ENCODE measurements at regions of chr7 and their contacts with region 1.

Region 1: GRCh38 chr7:143240291-143241168 is 18.7 kb downstream of the TAS2R40 start:
- DNase-seq: peak; percentile 92
- H3K4me3 Mint-ChIP-seq: peak overlapping the region; percentile 11
- H3K27ac Mint-ChIP-seq: peak overlapping the region; percentile 82
- H3K4me1 Mint-ChIP-seq: peaks cover 44% of the 10 kb centered on the region
- H3K27me3 Mint-ChIP-seq: peaks cover 15% of the 10 kb centered on the region

Region 2: DNA sequence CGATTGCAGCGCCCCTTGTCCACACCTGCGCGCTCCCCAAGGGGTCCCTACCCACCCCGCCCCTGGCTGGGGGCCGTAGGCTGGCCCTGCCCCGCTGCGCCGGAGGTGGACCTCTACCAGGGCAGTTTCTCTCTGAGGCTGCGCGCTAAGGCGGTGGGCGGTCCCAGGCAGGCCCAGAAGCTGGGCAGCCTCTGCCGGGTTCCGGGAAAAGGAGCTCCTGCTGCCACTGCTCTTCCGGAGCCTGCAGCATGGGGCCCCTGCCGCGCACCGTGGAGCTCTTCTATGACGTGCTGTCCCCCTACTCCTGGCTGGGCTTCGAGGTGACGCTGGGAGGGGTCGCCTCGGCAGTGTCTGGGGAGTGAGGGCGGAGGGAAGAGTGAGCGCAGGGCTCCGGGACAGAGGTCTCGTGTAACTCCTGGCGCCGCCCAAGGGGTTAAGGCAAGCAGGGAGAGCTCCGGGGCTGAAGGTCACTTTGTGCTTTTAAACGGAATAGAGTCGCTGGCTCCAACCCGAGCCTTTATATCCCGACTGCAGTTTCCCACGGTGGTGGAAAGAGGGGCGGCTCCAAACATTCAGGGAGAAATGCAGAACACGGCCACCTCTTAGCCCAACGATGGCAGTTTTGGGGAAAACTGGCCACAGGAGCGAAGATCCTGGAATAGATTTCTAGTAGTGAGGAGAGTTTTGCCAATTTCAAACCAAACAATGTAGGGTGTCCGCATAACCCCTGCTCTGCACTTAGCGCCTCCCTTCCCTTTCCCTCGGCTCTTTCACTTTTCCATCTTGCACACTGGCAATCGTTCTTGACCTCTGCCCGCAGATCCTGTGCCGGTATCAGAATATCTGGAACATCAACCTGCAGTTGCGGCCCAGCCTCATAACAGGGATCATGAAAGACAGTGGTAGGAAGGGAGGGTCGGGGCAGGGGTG is 23.0 kb after region 1 on chr7 and contains the start of gene GSTK1:
- intact Hi-C with region 1: loop called (anchors 1 kb)
- DNase-seq: peak; percentile 96
- H3K4me3 Mint-ChIP-seq: peak within 1 kb of the TSS; percentile 97
- H3K27ac Mint-ChIP-seq: peak within 1 kb of the TSS; percentile 92
- H3K4me1 Mint-ChIP-seq: peaks cover 46% of the 10 kb centered on the region
- H3K27me3 Mint-ChIP-seq: no peaks in the 10 kb centered on the region
- total RNA-seq, gene GSTK1: 138 and 142 TPM in 2 replicates

Region 3: GRCh38 chr7:143287935-143288826 is 47.7 kb after region 1 on chr7 and contains the start of gene CASP2:
- intact Hi-C with region 1: loop called (anchors 1 kb)
- DNase-seq: peak; percentile 100
- H3K4me3 Mint-ChIP-seq: peak within 1 kb of the TSS; percentile 97
- H3K27ac Mint-ChIP-seq: peak within 1 kb of the TSS; percentile 95
- H3K4me1 Mint-ChIP-seq: peaks cover 54% of the 10 kb centered on the region
- H3K27me3 Mint-ChIP-seq: no peaks in the 10 kb centered on the region
- total RNA-seq, gene CASP2: 99.1 and 110 TPM in 2 replicates

Region 4: GRCh38 chr7:143305423-143306070 is 65.0 kb after region 1 on chr7:
- intact Hi-C with region 1: loop called (anchors 1 kb)
- DNase-seq: peak; percentile 90
- H3K4me3 Mint-ChIP-seq: no peak overlapping the region
- H3K27ac Mint-ChIP-seq: peak overlapping the region; percentile 39
- H3K4me1 Mint-ChIP-seq: peaks cover 64% of the 10 kb centered on the region
- H3K27me3 Mint-ChIP-seq: no peaks in the 10 kb centered on the region

Region 5: GRCh38 chr7:143380255-143380645 is 139.7 kb after region 1 on chr7:
- intact Hi-C with region 1: loop called (anchors 1 kb)
- DNase-seq: peak; percentile 96
- H3K4me3 Mint-ChIP-seq: peak overlapping the region; percentile 87
- H3K27ac Mint-ChIP-seq: peak overlapping the region; percentile 86
- H3K4me1 Mint-ChIP-seq: peaks cover 44% of the 10 kb centered on the region
- H3K27me3 Mint-ChIP-seq: no peaks in the 10 kb centered on the region

Region 6: DNA sequence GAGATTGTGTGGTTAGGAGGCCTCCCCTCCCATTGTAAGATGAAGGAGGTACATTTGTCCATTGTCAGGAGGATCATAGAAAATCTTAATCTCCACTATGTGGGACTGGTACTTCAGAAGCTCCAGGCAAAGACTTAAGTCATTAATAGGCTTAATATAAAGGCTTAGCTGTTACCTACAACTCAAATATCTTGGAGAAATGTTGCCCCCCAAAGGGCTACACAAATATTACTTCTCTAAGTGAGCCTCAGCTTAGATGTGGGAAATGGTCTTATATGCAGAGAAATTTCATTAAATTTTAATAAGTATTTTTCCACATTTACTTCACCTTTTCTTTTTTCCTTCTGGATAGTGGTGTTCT is 264.4 kb after region 1 on chr7:
- intact Hi-C with region 1: loop called (anchors 10 kb)
- DNase-seq: no peak
- H3K4me3 Mint-ChIP-seq: no peak overlapping the region
- H3K27ac Mint-ChIP-seq: no peak overlapping the region
- H3K4me1 Mint-ChIP-seq: peaks cover 2% of the 10 kb centered on the region
- H3K27me3 Mint-ChIP-seq: no peaks in the 10 kb centered on the region